Calu3 (cell line): ENCODE measurements at regions of chr10 and their contacts with region 1.

Region 1: DNA sequence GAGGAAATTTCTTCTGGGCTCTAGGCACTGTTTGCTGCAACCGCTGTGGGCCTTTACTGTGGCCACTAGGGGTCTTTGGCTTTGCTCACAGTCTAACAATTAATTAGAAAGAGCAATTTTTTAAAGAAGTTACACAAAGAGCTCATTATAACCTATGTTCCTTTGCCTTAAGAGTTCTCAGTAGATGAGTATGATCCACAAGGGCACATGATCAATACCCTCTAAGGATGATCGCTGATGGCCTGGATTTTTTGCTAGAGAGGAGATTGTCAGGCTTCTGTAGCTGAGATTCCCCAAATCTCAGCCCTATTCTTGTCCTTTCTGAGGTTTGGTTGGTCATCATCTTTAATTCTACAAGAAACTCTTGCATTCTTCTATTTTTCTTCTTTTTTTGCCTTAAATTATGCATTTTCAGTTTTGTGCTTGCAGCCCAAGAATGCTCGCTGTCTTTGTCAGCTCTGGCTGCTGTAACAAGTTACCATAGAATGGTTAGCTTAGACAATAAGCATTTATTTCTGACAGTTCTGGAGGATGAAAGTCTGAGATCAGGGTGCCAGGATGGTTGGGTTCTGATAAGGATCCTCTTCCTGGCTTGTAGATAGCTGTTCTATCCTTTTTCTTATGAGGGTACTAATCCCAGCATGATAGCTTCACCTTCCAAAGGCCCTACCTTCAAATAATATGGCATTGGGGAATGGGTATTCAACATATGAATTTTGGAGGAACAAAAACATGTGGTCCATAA is 81.0 kb upstream of the RHOBTB1 start:
- DNase-seq: peak; percentile 43
- H3K4me3 Mint-ChIP-seq: no peak overlapping the region
- H3K27ac Mint-ChIP-seq: no peak overlapping the region
- H3K4me1 Mint-ChIP-seq: peaks cover 47% of the 10 kb centered on the region
- H3K27me3 Mint-ChIP-seq: no peaks in the 10 kb centered on the region
- CTCF ChIP-seq: peak; percentile 80

Region 2: GRCh38 chr10:60934215-60935175 is 90.5 kb before region 1 on chr10:
- CTCF ChIA-PET with region 1: no interaction called
- intact Hi-C with region 1: loop called (anchors 1 kb)
- DNase-seq: no peak
- H3K4me3 Mint-ChIP-seq: no peak overlapping the region
- H3K27ac Mint-ChIP-seq: no peak overlapping the region
- H3K4me1 Mint-ChIP-seq: peaks cover 26% of the 10 kb centered on the region
- H3K27me3 Mint-ChIP-seq: no peaks in the 10 kb centered on the region
- CTCF ChIP-seq: no peak

Region 3: DNA sequence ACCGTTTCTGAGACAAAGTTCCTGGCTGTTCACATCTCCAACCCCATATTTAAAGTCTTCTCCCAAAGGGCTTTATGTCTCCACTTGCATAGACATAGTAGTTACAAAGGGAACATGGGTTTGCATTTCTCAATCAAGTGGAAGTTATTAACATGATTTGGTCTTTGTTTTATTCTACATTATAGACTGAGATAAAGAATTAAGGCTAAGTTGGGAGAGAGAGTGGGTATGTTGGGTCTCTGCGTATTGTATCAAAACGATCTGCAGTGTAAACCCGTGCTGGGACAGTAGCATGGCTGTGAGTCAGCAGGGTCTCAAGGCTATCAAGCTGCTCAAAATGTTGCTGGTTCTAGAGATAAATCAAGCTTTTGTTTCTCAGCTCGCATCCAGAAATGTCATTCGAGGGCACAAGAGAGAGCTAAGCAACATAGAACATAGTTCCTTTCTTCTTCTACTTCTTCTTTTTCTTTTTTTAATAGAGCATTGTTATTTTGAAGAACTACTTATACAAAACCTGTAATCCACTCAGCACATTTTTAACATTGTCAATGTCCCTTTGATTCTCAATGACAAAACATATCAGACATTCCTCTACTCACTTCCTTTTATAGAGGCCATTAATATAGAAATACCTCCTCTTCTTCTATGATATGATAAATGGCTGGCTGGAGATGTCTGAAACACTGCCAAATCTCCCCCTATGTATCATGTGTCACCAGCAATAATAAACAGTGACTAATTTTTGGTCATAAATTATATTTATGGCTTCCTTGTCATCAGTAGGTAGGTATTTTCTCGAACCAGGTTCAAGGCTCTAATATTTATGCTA is 46.5 kb before region 1 on chr10:
- CTCF ChIA-PET with region 1: no interaction called
- intact Hi-C with region 1: loop called (anchors 5 kb)
- DNase-seq: peak; percentile 56
- H3K4me3 Mint-ChIP-seq: peak overlapping the region; percentile 39
- H3K27ac Mint-ChIP-seq: peak overlapping the region; percentile 88
- H3K4me1 Mint-ChIP-seq: peaks cover 68% of the 10 kb centered on the region
- H3K27me3 Mint-ChIP-seq: no peaks in the 10 kb centered on the region
- CTCF ChIP-seq: no peak

Region 4: DNA sequence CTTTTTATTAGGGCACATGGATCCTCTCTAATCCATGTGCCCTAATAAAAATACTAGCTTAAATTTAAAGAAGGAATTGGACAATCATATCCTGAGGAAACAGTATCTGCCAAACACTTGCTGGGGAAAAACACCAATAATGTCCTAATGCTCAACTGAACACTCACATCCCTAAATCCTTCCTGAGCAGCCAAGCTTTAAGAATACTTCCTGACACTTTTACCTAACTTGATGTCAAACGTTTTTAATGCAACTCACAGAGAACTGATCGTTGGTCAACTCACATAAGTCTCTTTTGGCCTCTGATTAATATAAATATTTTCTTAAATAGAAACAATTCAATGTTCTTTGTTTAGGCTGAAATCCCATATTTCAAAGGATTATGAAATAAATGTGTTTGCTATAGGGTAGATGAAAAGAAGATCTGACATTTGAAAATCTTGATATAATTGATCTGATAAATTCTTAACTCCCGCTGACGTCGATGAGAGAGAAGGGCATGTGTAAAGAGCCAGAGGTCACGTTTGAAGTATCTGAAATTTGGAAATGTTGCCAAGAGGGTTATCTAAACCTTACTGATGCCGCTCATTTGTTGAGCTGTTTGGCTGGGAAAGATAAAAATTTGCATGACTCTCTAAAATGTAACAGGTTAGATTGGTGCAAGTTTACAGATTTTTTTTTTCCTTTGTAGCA is 41.8 kb after region 1 on chr10:
- CTCF ChIA-PET with region 1: no interaction called
- intact Hi-C with region 1: loop called (anchors 5 kb)
- DNase-seq: no peak
- H3K4me3 Mint-ChIP-seq: no peak overlapping the region
- H3K27ac Mint-ChIP-seq: no peak overlapping the region
- H3K4me1 Mint-ChIP-seq: no peaks in the 10 kb centered on the region
- H3K27me3 Mint-ChIP-seq: no peaks in the 10 kb centered on the region
- CTCF ChIP-seq: no peak

Region 5: DNA sequence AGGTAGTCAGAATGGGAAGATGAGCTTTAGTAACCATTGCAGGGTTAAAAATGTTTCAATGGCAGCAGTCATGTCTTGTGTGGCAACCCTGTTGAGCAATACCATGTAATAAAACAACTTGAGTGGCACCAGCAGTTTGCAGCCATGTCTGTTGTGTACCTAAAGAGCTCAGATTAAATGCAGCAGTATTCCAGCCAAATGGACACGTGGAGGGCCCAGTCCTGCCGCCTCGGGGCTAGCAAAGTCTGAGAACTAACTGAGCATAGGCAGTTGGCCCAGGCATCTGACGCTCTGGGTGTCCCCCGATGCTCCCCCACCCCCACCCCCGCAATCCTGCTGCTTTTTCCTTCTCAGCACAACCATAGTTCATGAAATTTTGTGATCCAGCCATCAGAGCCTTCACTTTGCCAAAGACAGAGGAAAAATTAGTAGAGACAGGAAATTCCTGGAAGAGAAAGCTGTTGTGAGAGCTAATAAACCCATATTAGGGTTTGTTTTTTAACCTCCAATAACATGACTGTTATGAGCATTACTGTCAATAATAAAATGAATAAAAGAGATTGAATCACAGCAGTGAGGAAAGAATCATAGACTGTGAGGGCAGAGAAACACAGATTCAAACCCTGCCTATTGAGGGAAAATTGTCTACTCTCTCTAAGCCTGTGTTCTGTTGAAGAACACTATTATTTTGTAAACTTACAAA is 139.6 kb after region 1 on chr10:
- CTCF ChIA-PET with region 1: no interaction called
- intact Hi-C with region 1: no loop called
- DNase-seq: no peak
- H3K4me3 Mint-ChIP-seq: no peak overlapping the region
- H3K27ac Mint-ChIP-seq: no peak overlapping the region
- H3K4me1 Mint-ChIP-seq: no peaks in the 10 kb centered on the region
- H3K27me3 Mint-ChIP-seq: no peaks in the 10 kb centered on the region
- CTCF ChIP-seq: no peak

Region 6: GRCh38 chr10:61244261-61244775 is 219.3 kb after region 1 on chr10:
- CTCF ChIA-PET with region 1: no interaction called
- intact Hi-C with region 1: no loop called
- DNase-seq: no peak
- H3K4me3 Mint-ChIP-seq: no peak overlapping the region
- H3K27ac Mint-ChIP-seq: no peak overlapping the region
- H3K4me1 Mint-ChIP-seq: no peaks in the 10 kb centered on the region
- H3K27me3 Mint-ChIP-seq: peaks cover 31% of the 10 kb centered on the region
- CTCF ChIP-seq: no peak

Region 7: GRCh38 chr10:61842755-61843497 is 817.9 kb after region 1 on chr10:
- CTCF ChIA-PET with region 1: no interaction called
- intact Hi-C with region 1: no loop called
- DNase-seq: no peak
- H3K4me3 Mint-ChIP-seq: no peak overlapping the region
- H3K27ac Mint-ChIP-seq: no peak overlapping the region
- H3K4me1 Mint-ChIP-seq: peaks cover 10% of the 10 kb centered on the region
- H3K27me3 Mint-ChIP-seq: peaks cover 29% of the 10 kb centered on the region
- CTCF ChIP-seq: no peak